ENCODE measurements at regions of chr3 and their contacts with region 1.

Region 1: DNA sequence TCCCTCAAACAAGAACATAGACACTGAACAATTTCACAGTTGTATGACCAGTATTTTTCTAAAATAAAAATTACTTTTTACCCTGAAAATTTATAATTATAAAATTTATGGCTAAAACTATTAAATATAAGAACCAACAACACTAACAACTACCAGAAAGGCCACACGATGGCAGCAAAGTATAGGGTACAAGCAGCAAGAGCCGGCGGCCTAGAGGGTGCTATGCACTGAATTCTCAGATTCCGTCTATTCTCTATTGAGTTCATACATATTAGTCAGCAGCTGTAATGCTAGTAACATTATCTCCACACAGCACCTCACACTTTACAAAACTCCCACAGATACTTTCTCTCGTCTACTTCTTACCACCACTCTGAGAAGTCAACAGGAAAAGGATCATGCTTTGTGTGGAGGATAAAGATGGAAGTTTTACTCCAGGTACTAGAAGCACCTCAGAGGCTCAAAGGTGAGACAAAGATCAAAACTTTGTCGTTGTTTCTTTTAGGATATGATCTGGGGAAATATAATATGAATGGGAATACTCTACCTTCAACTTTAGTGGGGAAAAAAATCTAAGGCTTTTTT is 160.5 kb downstream of the FGF12 start:
- DNase-seq: peak; percentile 61 to 74 (median 69)
- ATAC-seq: peak; percentile 56 to 75 (median 68)
- H3K4me3 ChIP-seq: peak overlapping the region in 2 of 12 donors; percentile 0 to 12
- H3K27ac ChIP-seq: peak overlapping the region in 8 of 12 donors; percentile 4 to 55 (median 48)
- H3K4me1 ChIP-seq: peaks cover 0 to 37% (median 9%) of the 10 kb centered on the region in 12 donors
- H3K27me3 ChIP-seq: no peaks in the 10 kb centered on the region
- CTCF ChIP-seq: peak; percentile 70 to 91 (median 82)
- POLR2A ChIP-seq: no peak

Region 2: GRCh38 chr3:192467230-192468140 is 99.3 kb before region 1 on chr3:
- intact Hi-C with region 1: loop called in 7 of 10 experiments (anchors 2 to 10 kb)
- DNase-seq: peak in 4 of 5 donors; percentile 33 to 45 (median 38)
- ATAC-seq: peak; percentile 45 to 85 (median 80)
- H3K4me3 ChIP-seq: no peak overlapping the region
- H3K27ac ChIP-seq: peak overlapping the region in 1 of 12 donors; percentile 6
- H3K4me1 ChIP-seq: peaks cover 0 to 5% (median 0%) of the 10 kb centered on the region in 12 donors
- H3K27me3 ChIP-seq: peaks cover 0 to 2% (median 0%) of the 10 kb centered on the region in 9 donors
- CTCF ChIP-seq: peak; percentile 83 to 97 (median 92)
- POLR2A ChIP-seq: no peak

Region 3: GRCh38 chr3:192727032-192727847 is 160.4 kb after region 1 on chr3 and contains the start of gene FGF12:
- intact Hi-C with region 1: loop called in 4 of 10 experiments (anchors 5 to 10 kb)
- DNase-seq: peak; percentile 82 to 90 (median 90)
- ATAC-seq: peak; percentile 87 to 95 (median 93)
- H3K4me3 ChIP-seq: peak within 1 kb of the TSS; percentile 19 to 70 (median 60)
- H3K27ac ChIP-seq: peak within 1 kb of the TSS; percentile 17 to 82 (median 74)
- H3K4me1 ChIP-seq: peaks cover 0 to 11% (median 1%) of the 10 kb centered on the region in 12 donors
- H3K27me3 ChIP-seq: no peaks in the 10 kb centered on the region
- CTCF ChIP-seq: no peak
- POLR2A ChIP-seq: peak in 1 of 2 donors; percentile 42
- total RNA-seq, gene FGF12: 118 to 420 (median 265) TPM

Region 4: DNA sequence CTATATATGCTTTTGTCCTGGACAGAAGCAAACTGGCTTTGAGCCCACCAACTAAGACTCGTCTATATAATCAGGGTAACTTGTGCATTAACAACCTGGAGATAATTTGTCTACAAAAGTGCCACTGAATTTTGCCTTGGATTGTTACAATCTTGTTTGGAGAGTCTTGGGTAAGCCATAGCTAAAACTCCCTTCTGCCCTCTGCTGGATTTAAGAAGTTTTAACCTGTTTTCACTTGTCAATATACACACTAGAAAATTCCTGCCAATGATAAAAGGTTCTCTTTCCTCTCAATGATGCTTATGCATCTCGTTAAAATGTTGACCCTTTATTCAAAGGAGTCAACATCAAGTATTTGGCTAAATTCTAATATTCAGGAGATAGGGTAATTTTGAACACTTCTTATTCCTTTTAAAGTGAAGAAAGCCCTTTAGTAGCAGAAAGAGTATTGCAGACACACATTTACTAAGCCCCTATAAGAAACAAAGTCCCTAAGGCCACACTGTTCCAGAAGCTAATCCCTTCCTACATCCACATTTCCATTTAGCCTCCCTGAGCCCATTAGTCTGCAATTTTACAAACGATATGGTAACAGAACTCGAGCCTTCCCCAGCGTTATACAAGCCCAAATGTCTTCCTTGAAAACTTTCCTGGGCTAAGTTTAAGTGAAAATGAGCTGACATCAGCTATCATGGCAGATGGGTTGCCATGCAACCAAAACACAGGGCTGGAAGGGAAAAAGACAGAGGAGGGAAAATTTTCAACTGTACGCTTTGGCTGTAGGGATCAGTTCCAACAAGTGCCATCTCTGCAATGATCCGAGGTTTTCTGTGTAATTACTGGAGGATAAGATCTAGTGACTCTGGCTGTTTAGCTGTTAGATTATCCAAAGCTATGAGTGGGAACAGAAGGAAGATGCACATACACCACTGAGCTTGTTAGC is 236.4 kb after region 1 on chr3:
- intact Hi-C with region 1: loop called (anchors 1 to 5 kb)
- DNase-seq: no peak
- ATAC-seq: peak in 2 of 4 donors; percentile 60 to 63
- H3K4me3 ChIP-seq: no peak overlapping the region
- H3K27ac ChIP-seq: no peak overlapping the region
- H3K4me1 ChIP-seq: peaks cover 0 to 8% (median 1%) of the 10 kb centered on the region in 12 donors
- H3K27me3 ChIP-seq: no peaks in the 10 kb centered on the region
- CTCF ChIP-seq: peak; percentile 41 to 72 (median 60)
- POLR2A ChIP-seq: no peak

Region 5: DNA sequence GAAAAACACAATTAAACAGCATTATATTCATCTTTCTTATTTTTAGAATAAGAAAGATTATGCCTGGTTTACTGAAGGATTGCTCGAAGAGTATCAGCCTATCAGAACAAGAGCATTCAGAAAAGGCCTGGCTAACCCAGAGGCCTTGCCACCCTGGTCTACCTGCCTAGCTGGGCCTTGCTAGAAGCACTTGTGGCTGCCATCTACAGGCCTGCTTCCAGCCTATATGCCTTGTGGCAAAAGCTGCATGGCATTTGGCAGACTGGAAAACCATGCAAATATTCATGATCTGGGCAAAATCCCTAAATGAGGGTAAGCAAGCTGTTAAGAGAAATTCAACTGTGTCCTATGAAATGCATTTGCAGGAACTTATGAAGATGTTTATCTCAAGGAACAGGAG is 997.2 kb after region 1 on chr3:
- intact Hi-C with region 1: loop called in 3 of 10 experiments (anchors 5 to 10 kb)
- DNase-seq: peak in 1 of 5 donors; percentile 28
- ATAC-seq: peak in 3 of 4 donors; percentile 66 to 72 (median 69)
- H3K4me3 ChIP-seq: no peak overlapping the region
- H3K27ac ChIP-seq: no peak overlapping the region
- H3K4me1 ChIP-seq: peaks cover 0 to 5% (median 0%) of the 10 kb centered on the region in 12 donors
- H3K27me3 ChIP-seq: no peaks in the 10 kb centered on the region
- CTCF ChIP-seq: peak in 5 of 12 donors; percentile 17 to 29 (median 23)
- POLR2A ChIP-seq: no peak